Psoas muscle (tissue), 8 donors: ENCODE measurements at regions of chr10 and their contacts with region 1.

Region 1: GRCh38 chr10:43648398-43649184 is at the start of gene ZNF32:
- DNase-seq: peak; percentile 89 to 93
- ATAC-seq: peak; percentile 96 to 98 (median 97)
- H3K4me3 ChIP-seq: peak within 1 kb of the TSS; percentile 92
- H3K27ac ChIP-seq: peak within 1 kb of the TSS; percentile 90
- H3K4me1 ChIP-seq: no peaks in the 10 kb centered on the region
- H3K27me3 ChIP-seq: no peaks in the 10 kb centered on the region
- CTCF ChIP-seq: no peak
- total RNA-seq, gene ZNF32: 46.5 to 55.5 (median 50.5) TPM

Region 2: DNA sequence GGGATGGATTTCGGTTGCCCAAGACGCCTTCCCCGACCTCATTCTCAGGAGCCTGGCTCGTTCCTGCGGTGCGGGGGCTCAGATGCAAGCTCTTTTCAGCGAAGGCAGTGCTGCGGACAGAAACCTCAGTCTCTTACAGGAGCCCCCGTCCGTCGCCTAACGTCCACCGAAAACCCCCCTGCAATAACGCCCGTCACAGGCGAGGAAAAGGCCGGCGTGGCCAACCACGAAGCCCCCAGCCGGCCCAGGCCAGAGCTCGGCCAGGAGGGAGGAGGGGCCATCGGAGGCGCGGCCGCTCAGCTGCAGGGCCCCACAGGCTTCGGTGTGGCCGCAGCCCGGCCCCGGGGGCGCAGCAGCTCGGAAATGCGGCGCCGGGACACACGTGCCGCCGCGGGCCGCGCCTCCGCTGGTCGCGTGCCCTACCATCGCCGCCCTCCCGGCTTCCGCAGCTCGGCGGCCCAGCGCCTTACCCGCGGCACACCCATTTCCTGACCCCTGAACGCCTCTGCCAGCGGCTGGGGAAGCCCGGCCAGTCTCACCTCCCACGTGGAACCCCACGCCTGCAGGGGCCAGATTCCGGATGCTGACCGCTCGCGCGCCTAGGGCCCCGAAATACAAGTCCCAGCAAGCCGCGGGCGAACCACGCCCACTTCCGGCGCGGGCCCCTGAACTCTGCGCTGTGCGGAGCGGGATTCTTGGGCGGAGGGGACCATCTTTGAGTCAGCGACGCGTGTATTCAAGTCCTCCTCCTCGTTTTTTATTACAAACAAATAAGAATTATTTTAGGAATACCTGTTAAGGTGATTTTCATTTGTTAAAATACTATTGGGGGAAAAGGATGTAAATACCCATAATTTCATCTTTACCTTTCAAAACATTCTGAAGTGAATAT is 74.3 kb before region 1 on chr10 and contains the start of gene ZNF239:
- intact Hi-C with region 1: loop called in 1 of 2 experiments (anchors 10 kb)
- DNase-seq: peak; percentile 93 to 95
- ATAC-seq: peak; percentile 98 to 100 (median 100)
- H3K4me3 ChIP-seq: peak within 1 kb of the TSS; percentile 84
- H3K27ac ChIP-seq: peak within 1 kb of the TSS; percentile 82
- H3K4me1 ChIP-seq: no peaks in the 10 kb centered on the region
- H3K27me3 ChIP-seq: no peaks in the 10 kb centered on the region
- CTCF ChIP-seq: no peak
- total RNA-seq, gene ZNF239: 3.5 to 5.3 (median 4.2) TPM

Region 3: DNA sequence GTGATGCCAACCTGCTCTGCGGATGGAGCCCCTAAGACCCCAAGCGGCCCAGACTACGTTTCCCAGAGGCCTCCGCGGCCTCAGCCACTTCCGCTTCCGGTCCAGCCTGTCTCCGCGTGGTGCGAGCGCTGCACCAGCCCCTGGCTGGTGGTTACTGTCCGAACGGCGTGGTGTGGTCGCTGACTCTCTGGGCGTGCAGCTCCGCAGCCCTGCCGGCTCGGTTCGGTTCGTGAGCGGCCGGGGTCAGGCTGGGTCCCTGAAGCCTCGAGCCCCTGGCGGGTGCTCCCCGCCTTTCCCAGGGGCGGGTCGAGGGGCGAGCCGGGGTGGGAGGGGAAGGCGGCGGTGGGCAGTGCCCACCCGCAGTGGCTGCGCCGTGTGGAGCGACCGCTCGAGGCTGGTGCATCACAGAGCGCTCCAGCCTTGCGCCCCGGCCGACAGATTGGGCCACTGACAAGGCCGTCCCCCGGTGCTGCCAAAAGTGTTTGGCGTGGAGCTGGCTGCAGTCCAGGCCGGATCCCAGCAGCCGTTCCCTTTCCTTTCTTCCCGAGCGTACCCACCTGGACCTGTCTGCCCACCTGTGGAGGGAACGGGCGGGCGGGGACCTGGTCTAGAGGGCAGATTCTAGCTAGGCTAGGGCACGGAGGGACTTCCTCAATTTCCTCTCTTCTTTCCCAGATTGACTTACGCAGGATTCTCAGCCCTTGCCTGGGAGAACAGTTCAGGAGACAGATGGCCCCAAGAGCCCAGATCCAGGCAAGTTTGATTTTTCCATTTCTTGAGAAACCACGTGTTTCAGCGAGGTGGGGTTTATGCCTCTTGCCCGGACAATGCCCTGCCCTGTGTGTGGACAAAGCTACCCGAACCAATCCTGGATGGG is 42.0 kb before region 1 on chr10 and contains the start of gene ZNF485:
- intact Hi-C with region 1: loop called (anchors 2 to 5 kb)
- DNase-seq: peak; percentile 78 to 87
- ATAC-seq: peak; percentile 94 to 100 (median 98)
- H3K4me3 ChIP-seq: peak within 1 kb of the TSS; percentile 90
- H3K27ac ChIP-seq: peak within 1 kb of the TSS; percentile 88
- H3K4me1 ChIP-seq: no peaks in the 10 kb centered on the region
- H3K27me3 ChIP-seq: no peaks in the 10 kb centered on the region
- CTCF ChIP-seq: no peak
- total RNA-seq, gene ZNF485: 3.4 to 6.4 (median 3.9) TPM

Region 4: GRCh38 chr10:44102726-44103255 is 454.2 kb after region 1 on chr10:
- intact Hi-C with region 1: no loop called
- DNase-seq: no peak
- ATAC-seq: no peak
- H3K4me3 ChIP-seq: no peak overlapping the region
- H3K27ac ChIP-seq: no peak overlapping the region
- H3K4me1 ChIP-seq: no peaks in the 10 kb centered on the region
- H3K27me3 ChIP-seq: no peaks in the 10 kb centered on the region
- CTCF ChIP-seq: no peak